ENCODE measurements at regions of chr2 and their contacts with region 1.

Region 1: DNA sequence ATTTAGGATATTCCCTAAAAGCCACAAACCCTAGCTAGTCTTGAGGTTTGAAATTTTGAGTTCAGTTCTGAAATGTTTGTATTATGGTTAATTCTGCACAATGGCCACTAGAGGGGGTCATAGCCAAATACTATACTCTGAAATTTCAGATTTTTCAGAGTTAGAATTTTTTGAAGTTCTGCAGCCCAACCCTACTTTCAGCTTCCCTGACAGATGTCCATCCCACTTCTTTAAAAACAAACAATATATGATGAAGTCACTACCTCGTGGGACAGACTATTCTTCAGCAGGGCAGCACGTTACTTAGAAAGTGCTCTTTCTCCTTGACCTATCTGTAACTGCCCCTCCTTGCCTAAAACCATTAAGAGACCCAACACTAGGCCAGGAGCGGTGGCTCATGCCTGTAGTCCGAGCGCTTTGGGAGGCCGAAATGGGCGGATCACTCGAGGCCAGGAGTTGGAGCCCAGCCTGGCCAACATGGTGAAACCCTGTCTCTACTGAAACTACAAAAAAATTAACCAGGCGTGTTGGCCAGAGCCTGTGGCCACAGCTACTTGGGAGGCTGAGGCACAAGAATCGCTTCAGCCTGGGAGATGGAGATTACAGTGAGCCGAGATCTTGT is 48.2 kb upstream of the PAPOLG start:
- DNase-seq: peak in 1 of 4 donors; percentile 8
- ATAC-seq: peak; percentile 47
- H3K4me3 ChIP-seq: no peak overlapping the region
- H3K27ac ChIP-seq: no peak overlapping the region
- H3K4me1 ChIP-seq: no peaks in the 10 kb centered on the region
- H3K27me3 ChIP-seq: no peaks in the 10 kb centered on the region
- CTCF ChIP-seq: peak; percentile 49 to 72 (median 64)
- POLR2A ChIP-seq: no peak

Region 2: GRCh38 chr2:60002158-60002867 is 705.5 kb before region 1 on chr2:
- intact Hi-C with region 1: no loop called
- DNase-seq: no peak
- ATAC-seq: no peak
- H3K4me3 ChIP-seq: no peak overlapping the region
- H3K27ac ChIP-seq: no peak overlapping the region
- H3K4me1 ChIP-seq: no peaks in the 10 kb centered on the region
- H3K27me3 ChIP-seq: no peaks in the 10 kb centered on the region
- CTCF ChIP-seq: no peak
- POLR2A ChIP-seq: no peak

Region 3: DNA sequence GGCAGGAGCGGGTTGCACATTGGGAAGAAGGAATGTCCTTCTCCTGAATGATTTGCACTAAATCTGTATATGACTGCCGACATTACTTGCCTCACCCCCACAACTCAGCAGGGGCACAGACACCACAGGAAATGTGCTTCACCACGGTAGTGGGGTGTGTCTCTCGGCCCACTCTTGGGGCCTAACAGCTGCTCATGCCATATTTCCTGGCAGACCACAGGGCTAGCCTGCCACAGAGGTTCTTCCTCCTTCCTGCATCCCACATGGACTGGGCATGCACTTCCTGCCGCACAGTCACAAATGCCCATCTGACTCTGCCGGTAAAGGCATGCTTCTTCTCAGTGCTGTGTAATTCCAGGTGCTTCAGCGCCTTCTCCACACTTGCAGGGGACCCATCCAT is 37.9 kb after region 1 on chr2:
- intact Hi-C with region 1: no loop called
- DNase-seq: no peak
- ATAC-seq: no peak
- H3K4me3 ChIP-seq: no peak overlapping the region
- H3K27ac ChIP-seq: no peak overlapping the region
- H3K4me1 ChIP-seq: no peaks in the 10 kb centered on the region
- H3K27me3 ChIP-seq: no peaks in the 10 kb centered on the region
- CTCF ChIP-seq: no peak
- POLR2A ChIP-seq: no peak

Region 4: DNA sequence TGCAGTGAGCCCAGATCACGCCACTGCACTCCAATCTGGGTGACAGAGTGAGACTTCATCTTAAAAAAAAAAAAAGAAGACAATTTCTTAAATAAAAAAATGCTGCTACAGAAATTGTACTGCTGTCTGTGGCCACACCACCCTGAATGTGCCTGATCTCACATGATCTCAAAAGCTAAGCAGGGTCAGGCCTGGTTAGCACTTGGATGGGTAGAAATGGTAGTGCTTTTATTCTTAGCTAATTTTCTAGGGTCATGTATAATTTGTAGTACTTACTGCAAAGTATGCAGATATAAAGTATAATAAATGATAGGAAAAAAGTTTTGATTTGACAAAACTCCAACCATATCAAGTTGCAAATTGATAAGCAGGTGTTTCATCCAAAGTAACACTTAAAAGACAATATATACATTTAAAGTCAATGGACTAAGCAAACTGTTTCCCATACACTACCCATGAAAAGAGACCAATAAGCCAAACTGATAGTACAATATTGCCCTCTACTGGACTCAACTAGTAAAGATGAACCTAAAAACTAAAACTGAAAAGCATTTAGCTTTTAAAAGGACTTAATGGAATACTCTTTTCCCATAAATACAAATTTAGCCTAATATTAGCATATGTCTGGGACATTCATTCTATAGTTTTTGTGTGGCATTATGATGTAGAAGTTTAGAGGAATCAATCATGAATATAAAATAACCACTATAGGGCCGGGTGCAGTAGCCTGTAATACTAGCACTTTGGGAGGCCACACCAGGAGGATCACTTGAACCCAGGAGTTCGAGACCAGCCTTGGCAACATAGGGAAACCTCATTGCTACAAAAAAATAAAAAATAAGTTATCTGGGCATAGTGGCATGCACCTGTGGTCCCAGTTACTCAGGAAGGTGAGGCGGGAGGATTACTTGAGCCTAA is 291.0 kb after region 1 on chr2:
- intact Hi-C with region 1: loop called (anchors 5 kb)
- DNase-seq: no peak
- ATAC-seq: peak; percentile 74
- H3K4me3 ChIP-seq: no peak overlapping the region
- H3K27ac ChIP-seq: no peak overlapping the region
- H3K4me1 ChIP-seq: no peaks in the 10 kb centered on the region
- H3K27me3 ChIP-seq: no peaks in the 10 kb centered on the region
- CTCF ChIP-seq: peak; percentile 18 to 74 (median 72)
- POLR2A ChIP-seq: no peak

Measured in body of pancreas (tissue), 4 donors.